Heart left ventricle (tissue), 16 donors: ENCODE measurements at regions of chr5 and their contacts with region 1.

Region 1: GRCh38 chr5:153974131-153974812 is 64.4 kb downstream of the FAM114A2 start:
- DNase-seq: no peak
- ATAC-seq: peak in 3 of 4 donors; percentile 25 to 71 (median 60)
- H3K4me3 ChIP-seq: no peak overlapping the region
- H3K27ac ChIP-seq: no peak overlapping the region
- H3K4me1 ChIP-seq: peaks cover 0 to 6% (median 0%) of the 10 kb centered on the region in 12 donors
- H3K27me3 ChIP-seq: no peaks in the 10 kb centered on the region
- CTCF ChIP-seq: peak; percentile 58 to 83 (median 74)
- POLR2A ChIP-seq: no peak

Region 2: GRCh38 chr5:154065971-154066370 is 91.7 kb after region 1 on chr5:
- intact Hi-C with region 1: loop called in 2 of 10 experiments (anchors 5 to 10 kb)
- DNase-seq: no peak
- ATAC-seq: no peak
- H3K4me3 ChIP-seq: no peak overlapping the region
- H3K27ac ChIP-seq: no peak overlapping the region
- H3K4me1 ChIP-seq: no peaks in the 10 kb centered on the region
- H3K27me3 ChIP-seq: no peaks in the 10 kb centered on the region
- CTCF ChIP-seq: no peak
- POLR2A ChIP-seq: no peak

Region 3: DNA sequence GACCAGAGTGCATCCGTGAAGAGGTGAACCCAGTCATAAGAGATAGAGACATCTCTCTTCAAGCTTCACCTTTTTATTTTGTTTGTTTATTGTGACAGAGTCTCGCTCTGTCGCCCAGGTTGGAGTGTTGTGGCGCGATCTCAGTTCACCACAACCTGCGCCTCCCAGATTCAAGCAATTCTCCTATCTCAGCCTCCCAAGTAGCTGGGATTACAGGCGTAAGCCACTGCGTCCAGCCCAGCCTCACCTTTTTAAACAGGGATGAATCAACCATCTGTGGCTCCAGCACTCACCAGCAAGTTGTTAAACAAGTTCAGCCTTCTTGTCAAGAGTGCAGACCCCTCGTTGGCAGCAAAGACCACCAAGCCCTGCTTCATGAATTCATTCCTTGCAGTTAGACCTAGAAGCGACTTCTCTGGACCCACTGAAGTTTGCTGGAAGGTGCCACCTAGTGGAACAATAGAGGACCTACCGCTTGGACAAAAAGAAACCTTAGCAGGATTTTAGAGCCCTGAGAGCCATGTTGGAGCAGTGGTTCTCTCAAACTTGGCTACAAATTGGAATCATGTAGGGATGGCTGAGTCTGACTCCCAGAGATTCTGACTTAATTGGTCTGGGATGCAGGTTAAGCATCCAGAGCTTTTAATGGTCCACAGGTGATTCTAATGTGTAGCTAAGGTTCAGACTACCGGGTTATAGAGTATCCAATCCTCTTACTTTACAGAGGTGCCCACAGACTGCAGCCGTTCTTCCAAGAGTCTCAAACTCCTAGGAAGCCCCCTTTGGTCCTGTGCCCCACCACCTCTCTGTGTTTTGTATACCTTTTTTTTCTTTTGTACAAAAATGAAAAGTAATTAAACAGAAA is 205.8 kb after region 1 on chr5:
- intact Hi-C with region 1: loop called (anchors 1 to 5 kb)
- DNase-seq: peak in 1 of 5 donors; percentile 41
- ATAC-seq: peak in 3 of 4 donors; percentile 84 to 88 (median 88)
- H3K4me3 ChIP-seq: no peak overlapping the region
- H3K27ac ChIP-seq: no peak overlapping the region
- H3K4me1 ChIP-seq: peaks cover 0 to 12% (median 0%) of the 10 kb centered on the region in 12 donors
- H3K27me3 ChIP-seq: no peaks in the 10 kb centered on the region
- CTCF ChIP-seq: peak; percentile 68 to 87 (median 76)
- POLR2A ChIP-seq: no peak

Region 4: GRCh38 chr5:154405078-154405792 is 431.0 kb after region 1 on chr5:
- intact Hi-C with region 1: loop called (anchors 2 to 10 kb)
- DNase-seq: peak; percentile 81 to 89 (median 82)
- ATAC-seq: peak; percentile 88 to 99 (median 97)
- H3K4me3 ChIP-seq: peak overlapping the region in 11 of 12 donors; percentile 3 to 62 (median 45)
- H3K27ac ChIP-seq: peak overlapping the region in 1 of 12 donors; percentile 60
- H3K4me1 ChIP-seq: peaks cover 0 to 13% (median 8%) of the 10 kb centered on the region in 12 donors
- H3K27me3 ChIP-seq: no peaks in the 10 kb centered on the region
- CTCF ChIP-seq: peak; percentile 76 to 96 (median 92)
- POLR2A ChIP-seq: no peak

Region 5: DNA sequence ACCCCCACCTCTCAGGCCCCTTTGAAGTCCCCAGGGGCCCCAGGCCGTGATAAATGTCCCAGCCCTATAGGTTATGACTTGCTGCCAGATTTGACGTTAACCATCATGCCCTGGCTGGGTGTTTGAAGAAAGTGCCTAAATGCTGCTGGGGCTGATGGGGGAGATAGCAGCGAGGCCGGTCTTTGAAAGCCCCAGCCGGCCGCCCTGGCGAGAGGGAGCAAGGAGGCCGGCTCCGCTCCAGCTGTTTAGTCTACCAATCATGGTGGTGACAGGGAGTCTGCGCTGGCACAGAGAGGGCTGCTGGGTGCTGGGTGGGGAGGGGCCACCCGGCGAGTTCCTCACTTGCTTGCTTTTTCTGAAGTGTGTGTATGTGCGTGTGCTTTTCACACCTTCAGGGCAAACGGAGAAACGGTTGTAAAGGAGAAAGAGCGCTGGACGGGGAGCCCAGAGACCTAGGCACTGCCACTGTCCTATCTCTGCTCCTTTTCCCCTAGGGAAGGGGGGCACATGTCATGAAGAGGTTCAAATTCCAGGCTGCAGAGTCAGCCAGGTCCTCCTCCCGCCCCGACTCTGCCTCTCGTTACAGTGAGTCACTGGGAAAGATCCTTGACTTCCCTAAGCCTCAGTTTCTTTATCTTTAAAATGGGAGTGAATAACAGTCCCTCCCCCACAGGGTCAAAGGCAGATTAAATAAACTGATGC is 629.9 kb after region 1 on chr5:
- intact Hi-C with region 1: loop called in 1 of 10 experiments (anchors 10 kb)
- DNase-seq: peak in 4 of 5 donors; percentile 25 to 67 (median 53)
- ATAC-seq: peak in 3 of 4 donors; percentile 77 to 80 (median 79)
- H3K4me3 ChIP-seq: peak overlapping the region in 8 of 12 donors; percentile 8 to 34 (median 24)
- H3K27ac ChIP-seq: no peak overlapping the region
- H3K4me1 ChIP-seq: peaks cover 0 to 7% (median 0%) of the 10 kb centered on the region in 12 donors
- H3K27me3 ChIP-seq: peaks cover 0 to 34% (median 7%) of the 10 kb centered on the region in 9 donors
- CTCF ChIP-seq: no peak
- POLR2A ChIP-seq: no peak

Region 6: GRCh38 chr5:154647114-154647760 is 673.0 kb after region 1 on chr5:
- intact Hi-C with region 1: loop called in 1 of 10 experiments (anchors 10 kb)
- DNase-seq: peak in 4 of 5 donors; percentile 24 to 75 (median 50)
- ATAC-seq: peak; percentile 32 to 80 (median 58)
- H3K4me3 ChIP-seq: peak overlapping the region in 11 of 12 donors; percentile 0 to 56 (median 39)
- H3K27ac ChIP-seq: no peak overlapping the region
- H3K4me1 ChIP-seq: peaks cover 0 to 14% (median 6%) of the 10 kb centered on the region in 12 donors
- H3K27me3 ChIP-seq: peaks cover 0 to 4% (median 0%) of the 10 kb centered on the region in 9 donors
- CTCF ChIP-seq: no peak
- POLR2A ChIP-seq: no peak